ENCODE measurements at regions of chr20 and their contacts with region 1.

Region 1: GRCh38 chr20:47588158-47588557 is 86.5 kb downstream of the NCOA3 start:
- DNase-seq: no peak
- ATAC-seq: no peak
- H3K4me3 ChIP-seq: no peak overlapping the region
- H3K4me3 Mint-ChIP-seq: no peak overlapping the region
- H3K27ac ChIP-seq: no peak overlapping the region
- H3K27ac Mint-ChIP-seq: no peak overlapping the region
- H3K4me1 ChIP-seq: peaks cover 6 to 8% of the 10 kb centered on the region in 2 donors
- H3K4me1 Mint-ChIP-seq: peaks cover 54% of the 10 kb centered on the region
- H3K27me3 ChIP-seq: no peaks in the 10 kb centered on the region
- H3K27me3 Mint-ChIP-seq: no peaks in the 10 kb centered on the region
- CTCF ChIP-seq: no peak

Region 2: DNA sequence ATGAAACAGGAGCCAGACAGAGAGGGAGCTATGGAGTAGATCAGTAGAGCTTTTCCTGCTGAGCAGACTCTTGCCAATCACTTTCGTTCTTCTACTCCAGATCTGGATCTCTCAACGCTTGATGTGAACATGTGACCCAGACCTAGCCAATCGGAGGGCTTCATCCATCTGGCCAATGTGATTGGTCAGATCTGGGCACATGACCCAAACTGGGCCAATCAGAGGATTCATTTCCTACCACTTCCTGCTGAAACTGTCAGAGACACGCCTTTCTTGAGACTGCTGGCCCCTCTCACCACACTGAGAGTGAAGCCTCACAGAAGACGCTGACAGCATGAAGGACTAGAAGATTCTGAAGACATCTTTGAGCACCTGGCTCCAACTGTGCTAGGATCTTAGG is 187.5 kb before region 1 on chr20:
- CTCF ChIA-PET with region 1: no interaction called
- POLR2A ChIA-PET with region 1: no interaction called
- intact Hi-C with region 1: no loop called
- DNase-seq: no peak
- ATAC-seq: no peak
- H3K4me3 ChIP-seq: no peak overlapping the region
- H3K4me3 Mint-ChIP-seq: no peak overlapping the region
- H3K27ac ChIP-seq: no peak overlapping the region
- H3K27ac Mint-ChIP-seq: no peak overlapping the region
- H3K4me1 ChIP-seq: peaks cover 0 to 3% of the 10 kb centered on the region in 2 donors
- H3K4me1 Mint-ChIP-seq: peaks cover 25% of the 10 kb centered on the region
- H3K27me3 ChIP-seq: no peaks in the 10 kb centered on the region
- H3K27me3 Mint-ChIP-seq: no peaks in the 10 kb centered on the region
- CTCF ChIP-seq: no peak

Region 3: GRCh38 chr20:47561180-47561579 is 27.0 kb before region 1 on chr20:
- CTCF ChIA-PET with region 1: no interaction called
- POLR2A ChIA-PET with region 1: interaction called, 3 read pairs
- intact Hi-C with region 1: loop called (anchors 5 kb)
- DNase-seq: no peak
- ATAC-seq: no peak
- H3K4me3 ChIP-seq: peak overlapping the region in 1 of 5 experiments; percentile 36
- H3K4me3 Mint-ChIP-seq: peak overlapping the region; percentile 50
- H3K27ac ChIP-seq: peak overlapping the region in 1 of 2 donors; percentile 51
- H3K27ac Mint-ChIP-seq: no peak overlapping the region
- H3K4me1 ChIP-seq: peaks cover 75 to 87% of the 10 kb centered on the region in 2 donors
- H3K4me1 Mint-ChIP-seq: peaks cover 88% of the 10 kb centered on the region
- H3K27me3 ChIP-seq: no peaks in the 10 kb centered on the region
- H3K27me3 Mint-ChIP-seq: no peaks in the 10 kb centered on the region
- CTCF ChIP-seq: no peak

Region 4: GRCh38 chr20:48012197-48013085 is 424.3 kb after region 1 on chr20:
- CTCF ChIA-PET with region 1: no interaction called
- POLR2A ChIA-PET with region 1: no interaction called
- intact Hi-C with region 1: no loop called
- DNase-seq: no peak
- ATAC-seq: no peak
- H3K4me3 ChIP-seq: no peak overlapping the region
- H3K4me3 Mint-ChIP-seq: no peak overlapping the region
- H3K27ac ChIP-seq: no peak overlapping the region
- H3K27ac Mint-ChIP-seq: no peak overlapping the region
- H3K4me1 ChIP-seq: peaks cover 0 to 3% of the 10 kb centered on the region in 2 donors
- H3K4me1 Mint-ChIP-seq: peaks cover 8% of the 10 kb centered on the region
- H3K27me3 ChIP-seq: peaks cover 0 to 4% (median 0%) of the 10 kb centered on the region in 4 experiments
- H3K27me3 Mint-ChIP-seq: peaks cover 12% of the 10 kb centered on the region
- CTCF ChIP-seq: no peak